Activated CD4-positive, alpha-beta T cell treated with anti-CD3 and anti-CD28 coated beads for 36 hours (primary cell): ENCODE measurements at regions of chr7 and their contacts with region 1.

Region 1: GRCh38 chr7:120792091-120792860 is 65.7 kb downstream of the TSPAN12 start:
- DNase-seq: peak; percentile 79
- ATAC-seq: peak; percentile 73
- H3K4me3 Mint-ChIP-seq: no peak overlapping the region
- H3K27ac Mint-ChIP-seq: no peak overlapping the region
- H3K4me1 Mint-ChIP-seq: no peaks in the 10 kb centered on the region
- H3K27me3 Mint-ChIP-seq: peaks cover 8% of the 10 kb centered on the region

Region 2: GRCh38 chr7:120639884-120640283 is 152.4 kb before region 1 on chr7:
- CTCF ChIA-PET with region 1: no interaction called
- POLR2A ChIA-PET with region 1: no interaction called
- intact Hi-C with region 1: no loop called
- DNase-seq: no peak
- ATAC-seq: no peak
- H3K4me3 Mint-ChIP-seq: no peak overlapping the region
- H3K27ac Mint-ChIP-seq: no peak overlapping the region
- H3K4me1 Mint-ChIP-seq: no peaks in the 10 kb centered on the region
- H3K27me3 Mint-ChIP-seq: no peaks in the 10 kb centered on the region

Region 3: GRCh38 chr7:120857588-120858573 is 65.6 kb after region 1 on chr7 and contains the start of gene TSPAN12:
- CTCF ChIA-PET with region 1: interaction called, 10 read pairs
- POLR2A ChIA-PET with region 1: no interaction called
- intact Hi-C with region 1: no loop called
- DNase-seq: peak; percentile 72
- ATAC-seq: peak; percentile 95
- H3K4me3 Mint-ChIP-seq: peak within 1 kb of the TSS; percentile 71
- H3K27ac Mint-ChIP-seq: no peak within 1 kb of the TSS
- H3K4me1 Mint-ChIP-seq: peaks cover 8% of the 10 kb centered on the region
- H3K27me3 Mint-ChIP-seq: peaks cover 47% of the 10 kb centered on the region
- total RNA-seq, gene TSPAN12: not detected

Region 4: GRCh38 chr7:120941064-120941463 is 148.8 kb after region 1 on chr7:
- CTCF ChIA-PET with region 1: interaction called, 4 read pairs
- POLR2A ChIA-PET with region 1: no interaction called
- intact Hi-C with region 1: loop called (anchors 1 to 2 kb)
- DNase-seq: no peak
- ATAC-seq: no peak
- H3K4me3 Mint-ChIP-seq: no peak overlapping the region
- H3K27ac Mint-ChIP-seq: no peak overlapping the region
- H3K4me1 Mint-ChIP-seq: no peaks in the 10 kb centered on the region
- H3K27me3 Mint-ChIP-seq: peaks cover 2% of the 10 kb centered on the region

Region 5: DNA sequence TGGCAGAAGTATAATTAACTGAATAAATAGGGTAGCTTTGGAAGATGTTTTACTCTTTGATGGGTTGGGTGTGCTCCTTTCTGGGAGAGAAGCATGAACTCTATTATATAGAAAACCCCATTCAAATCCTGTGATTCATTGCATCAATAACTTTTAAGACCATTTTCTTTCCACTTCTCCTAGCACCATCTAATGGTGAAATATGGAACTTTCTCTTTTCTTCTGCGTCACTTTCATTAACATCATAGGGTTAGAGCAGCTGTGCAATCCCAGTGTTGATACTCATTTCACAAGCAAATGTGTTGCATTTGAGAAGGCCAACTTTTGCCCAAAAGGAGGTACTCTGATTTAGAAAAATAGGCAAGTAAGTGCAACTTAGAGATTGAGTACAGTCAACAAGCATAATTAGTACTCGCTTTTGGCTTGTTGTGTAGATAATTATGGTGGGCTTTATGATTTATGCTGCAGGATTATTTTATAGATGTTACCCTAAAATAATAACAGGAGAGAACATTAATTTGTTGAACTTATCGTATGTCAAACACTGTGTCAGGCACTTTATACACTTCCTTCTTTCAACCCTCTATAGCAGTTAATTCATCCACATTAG is 289.2 kb after region 1 on chr7:
- CTCF ChIA-PET with region 1: interaction called, 14 read pairs
- POLR2A ChIA-PET with region 1: no interaction called
- intact Hi-C with region 1: loop called (anchors 1 to 5 kb)
- DNase-seq: no peak
- ATAC-seq: peak; percentile 65
- H3K4me3 Mint-ChIP-seq: no peak overlapping the region
- H3K27ac Mint-ChIP-seq: no peak overlapping the region
- H3K4me1 Mint-ChIP-seq: no peaks in the 10 kb centered on the region
- H3K27me3 Mint-ChIP-seq: peaks cover 12% of the 10 kb centered on the region

Region 6: GRCh38 chr7:121107923-121108498 is 315.7 kb after region 1 on chr7:
- CTCF ChIA-PET with region 1: interaction called, 7 read pairs
- POLR2A ChIA-PET with region 1: no interaction called
- intact Hi-C with region 1: loop called (anchors 1 kb)
- DNase-seq: no peak
- ATAC-seq: peak; percentile 87
- H3K4me3 Mint-ChIP-seq: no peak overlapping the region
- H3K27ac Mint-ChIP-seq: no peak overlapping the region
- H3K4me1 Mint-ChIP-seq: no peaks in the 10 kb centered on the region
- H3K27me3 Mint-ChIP-seq: peaks cover 10% of the 10 kb centered on the region

Region 7: GRCh38 chr7:121643320-121643719 is 851.0 kb after region 1 on chr7:
- CTCF ChIA-PET with region 1: no interaction called
- POLR2A ChIA-PET with region 1: no interaction called
- intact Hi-C with region 1: no loop called
- DNase-seq: no peak
- ATAC-seq: no peak
- H3K4me3 Mint-ChIP-seq: no peak overlapping the region
- H3K27ac Mint-ChIP-seq: no peak overlapping the region
- H3K4me1 Mint-ChIP-seq: no peaks in the 10 kb centered on the region
- H3K27me3 Mint-ChIP-seq: no peaks in the 10 kb centered on the region